CD8-positive, alpha-beta T cell (primary cell): ENCODE measurements at regions of chr2 and their contacts with region 1.

Region 1: GRCh38 chr2:222860740-222861410 is at the start of gene ACSL3:
- DNase-seq: peak; percentile 83 to 93 (median 92)
- ATAC-seq: peak; percentile 96
- H3K4me3 ChIP-seq: peak within 1 kb of the TSS; percentile 64 to 69
- H3K4me3 Mint-ChIP-seq: peak within 1 kb of the TSS; percentile 82
- H3K27ac ChIP-seq: peak within 1 kb of the TSS; percentile 69 to 80
- H3K27ac Mint-ChIP-seq: peak within 1 kb of the TSS; percentile 91
- H3K4me1 ChIP-seq: peaks cover 25% of the 10 kb centered on the region
- H3K4me1 Mint-ChIP-seq: peaks cover 7% of the 10 kb centered on the region
- H3K27me3 ChIP-seq: no peaks in the 10 kb centered on the region
- H3K27me3 Mint-ChIP-seq: no peaks in the 10 kb centered on the region
- CTCF ChIP-seq: no peak
- total RNA-seq, gene ACSL3: 89.5 to 97.6 TPM

Region 2: GRCh38 chr2:222655787-222656525 is 204.9 kb before region 1 on chr2 and contains the start of gene FARSB:
- CTCF ChIA-PET with region 1: no interaction called
- POLR2A ChIA-PET with region 1: no interaction called
- intact Hi-C with region 1: loop called (anchors 1 to 2 kb)
- DNase-seq: peak; percentile 83 to 98 (median 92)
- ATAC-seq: peak; percentile 92
- H3K4me3 ChIP-seq: peak within 1 kb of the TSS; percentile 87 to 94
- H3K4me3 Mint-ChIP-seq: peak within 1 kb of the TSS; percentile 97
- H3K27ac ChIP-seq: peak within 1 kb of the TSS; percentile 89 to 95
- H3K27ac Mint-ChIP-seq: peak within 1 kb of the TSS; percentile 100
- H3K4me1 ChIP-seq: peaks cover 28% of the 10 kb centered on the region
- H3K4me1 Mint-ChIP-seq: peaks cover 44% of the 10 kb centered on the region
- H3K27me3 ChIP-seq: no peaks in the 10 kb centered on the region
- H3K27me3 Mint-ChIP-seq: no peaks in the 10 kb centered on the region
- CTCF ChIP-seq: no peak
- total RNA-seq, gene FARSB: 7.2 to 8.5 TPM

Region 3: DNA sequence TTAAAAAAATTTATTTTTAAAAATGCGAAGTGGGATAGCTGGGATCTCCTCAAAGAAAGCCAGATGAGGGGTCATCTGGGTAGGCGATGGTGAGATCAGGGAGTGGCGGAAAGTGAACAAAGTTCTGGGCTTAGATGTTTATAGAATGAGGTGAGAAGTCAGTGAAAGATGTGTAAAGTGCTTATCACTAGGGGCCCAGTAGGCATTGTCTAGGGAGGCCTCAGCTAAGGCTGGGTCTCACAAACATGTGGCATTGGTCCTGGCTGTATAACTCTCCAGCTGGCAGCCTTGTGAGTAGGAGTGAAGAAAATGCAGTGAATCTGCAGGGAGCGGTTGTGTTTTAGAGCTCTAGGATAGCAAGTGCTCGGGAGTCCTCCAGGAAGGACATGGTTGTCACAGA is 10.4 kb after region 1 on chr2:
- CTCF ChIA-PET with region 1: interaction called, 5 read pairs
- POLR2A ChIA-PET with region 1: interaction called, 13 read pairs
- intact Hi-C with region 1: no loop called
- DNase-seq: no peak
- ATAC-seq: no peak
- H3K4me3 ChIP-seq: no peak overlapping the region
- H3K4me3 Mint-ChIP-seq: no peak overlapping the region
- H3K27ac ChIP-seq: no peak overlapping the region
- H3K27ac Mint-ChIP-seq: no peak overlapping the region
- H3K4me1 ChIP-seq: peaks cover 12% of the 10 kb centered on the region
- H3K4me1 Mint-ChIP-seq: peaks cover 32% of the 10 kb centered on the region
- H3K27me3 ChIP-seq: no peaks in the 10 kb centered on the region
- H3K27me3 Mint-ChIP-seq: no peaks in the 10 kb centered on the region
- CTCF ChIP-seq: no peak